HCT116 (cell line): ENCODE measurements at regions of chr17 and their contacts with region 1.

Region 1: DNA sequence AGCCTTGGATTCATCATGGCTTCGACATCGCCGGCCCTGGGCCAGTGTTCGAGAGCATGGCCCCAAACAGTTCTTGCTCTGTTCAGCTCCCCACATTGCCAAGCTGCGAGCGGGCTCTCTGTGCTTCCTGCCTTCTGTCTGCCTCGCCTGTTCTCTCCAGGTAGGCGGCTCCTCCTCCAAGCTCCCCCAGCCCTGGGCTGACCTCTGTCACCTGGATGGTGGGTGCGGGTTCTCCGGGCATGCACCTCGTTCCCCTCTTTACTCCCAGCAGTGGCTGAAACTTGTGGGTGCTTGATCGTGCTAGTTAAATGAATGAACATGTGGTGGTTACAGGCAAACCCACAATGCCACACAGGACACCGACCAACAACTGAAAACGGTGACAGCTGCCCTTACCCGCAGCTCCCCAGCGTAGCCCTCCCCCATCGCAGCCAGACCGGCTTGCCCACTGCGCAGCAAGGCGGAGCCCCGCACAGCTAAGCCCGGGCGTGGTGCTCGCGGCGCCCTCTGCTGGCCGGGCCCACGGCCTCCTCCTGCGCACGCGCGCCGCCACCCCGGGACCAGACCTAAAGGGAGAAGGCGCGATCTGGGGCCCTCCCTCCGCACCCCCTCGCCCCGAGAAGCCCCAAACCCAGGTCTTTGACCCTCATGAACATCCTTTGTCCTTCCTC is 23.0 kb upstream of the EIF1 start:
- DNase-seq: peak; percentile 66
- ATAC-seq: peak; percentile 84
- H3K4me3 ChIP-seq: peak overlapping the region; percentile 44 to 57
- H3K27ac ChIP-seq: peak overlapping the region; percentile 69
- H3K4me1 ChIP-seq: peaks cover 14 to 61% of the 10 kb centered on the region in 2 experiments
- H3K27me3 ChIP-seq: no peaks in the 10 kb centered on the region
- CTCF ChIP-seq: peak; percentile 70 to 94 (median 92)
- POLR2A ChIP-seq: peak; percentile 30
- RAD21 ChIP-seq: peak; percentile 42; the same call in 1 of the 2 replicates

Region 2: DNA sequence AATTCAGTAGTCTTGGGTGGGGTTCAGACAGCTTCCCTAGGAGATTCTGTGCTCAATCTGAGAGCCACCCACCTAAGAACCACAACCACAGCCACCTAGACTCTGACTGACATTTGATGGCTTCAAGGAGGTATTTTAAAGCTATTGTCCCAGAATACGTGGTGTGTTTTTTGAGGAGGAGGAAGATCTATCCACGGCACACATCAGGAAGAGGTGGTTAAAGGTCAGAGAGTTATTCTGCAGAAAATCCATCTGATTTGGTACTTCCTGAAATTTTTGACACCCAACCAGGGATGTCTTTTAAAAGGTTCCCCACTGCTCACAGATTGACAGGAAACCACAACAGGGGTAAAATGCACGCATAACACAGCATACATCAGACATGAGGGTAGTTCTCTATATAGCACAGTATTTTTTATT is 1043.2 kb before region 1 on chr17:
- CTCF ChIA-PET with region 1: interaction called, 7 read pairs
- POLR2A ChIA-PET with region 1: no interaction called
- RAD21 ChIA-PET with region 1: no interaction called
- intact Hi-C with region 1: loop called (anchors 2 kb)
- DNase-seq: no peak
- ATAC-seq: no peak
- H3K4me3 ChIP-seq: no peak overlapping the region
- H3K27ac ChIP-seq: no peak overlapping the region
- H3K4me1 ChIP-seq: peaks cover 2 to 8% of the 10 kb centered on the region in 2 experiments; a peak in 3 of 4 replicates
- H3K27me3 ChIP-seq: no peaks in the 10 kb centered on the region
- CTCF ChIP-seq: no peak
- POLR2A ChIP-seq: no peak
- RAD21 ChIP-seq: no peak

Region 3: GRCh38 chr17:40909351-40909750 is 756.4 kb before region 1 on chr17:
- CTCF ChIA-PET with region 1: no interaction called
- POLR2A ChIA-PET with region 1: no interaction called
- RAD21 ChIA-PET with region 1: interaction called, 3 to 5 read pairs
- intact Hi-C with region 1: loop called (anchors 1 kb)
- DNase-seq: peak; percentile 95
- ATAC-seq: peak; percentile 88
- H3K4me3 ChIP-seq: no peak overlapping the region
- H3K27ac ChIP-seq: peak overlapping the region; percentile 77
- H3K4me1 ChIP-seq: peaks cover 57 to 69% of the 10 kb centered on the region in 2 experiments
- H3K27me3 ChIP-seq: no peaks in the 10 kb centered on the region
- CTCF ChIP-seq: peak; percentile 76 to 88 (median 81)
- POLR2A ChIP-seq: no peak
- RAD21 ChIP-seq: peak; percentile 99

Region 4: GRCh38 chr17:41530062-41531051 is 135.3 kb before region 1 on chr17:
- CTCF ChIA-PET with region 1: interaction called, 14 read pairs
- POLR2A ChIA-PET with region 1: interaction called, 7 read pairs
- RAD21 ChIA-PET with region 1: no interaction called
- intact Hi-C with region 1: no loop called
- DNase-seq: peak; percentile 86
- ATAC-seq: peak; percentile 66
- H3K4me3 ChIP-seq: peak overlapping the region; percentile 18 to 95
- H3K27ac ChIP-seq: peak overlapping the region; percentile 99
- H3K4me1 ChIP-seq: peaks cover 36 to 73% of the 10 kb centered on the region in 2 experiments
- H3K27me3 ChIP-seq: no peaks in the 10 kb centered on the region
- CTCF ChIP-seq: no peak
- POLR2A ChIP-seq: peak; percentile 45
- RAD21 ChIP-seq: no peak

Region 5: GRCh38 chr17:41648411-41649195 is 17.1 kb before region 1 on chr17:
- CTCF ChIA-PET with region 1: interaction called, 217 read pairs
- POLR2A ChIA-PET with region 1: interaction called, 4 read pairs
- RAD21 ChIA-PET with region 1: interaction called, 9 to 28 read pairs
- intact Hi-C with region 1: loop called (anchors 1 kb)
- DNase-seq: peak; percentile 77
- ATAC-seq: peak; percentile 81
- H3K4me3 ChIP-seq: peak overlapping the region; percentile 38 to 53
- H3K27ac ChIP-seq: peak overlapping the region; percentile 41
- H3K4me1 ChIP-seq: peaks cover 30 to 77% of the 10 kb centered on the region in 2 experiments
- H3K27me3 ChIP-seq: no peaks in the 10 kb centered on the region
- CTCF ChIP-seq: peak; percentile 90 to 98 (median 95)
- POLR2A ChIP-seq: no peak
- RAD21 ChIP-seq: peak; percentile 92